ENCODE measurements at regions of chr1 and their contacts with region 1.

Region 1: DNA sequence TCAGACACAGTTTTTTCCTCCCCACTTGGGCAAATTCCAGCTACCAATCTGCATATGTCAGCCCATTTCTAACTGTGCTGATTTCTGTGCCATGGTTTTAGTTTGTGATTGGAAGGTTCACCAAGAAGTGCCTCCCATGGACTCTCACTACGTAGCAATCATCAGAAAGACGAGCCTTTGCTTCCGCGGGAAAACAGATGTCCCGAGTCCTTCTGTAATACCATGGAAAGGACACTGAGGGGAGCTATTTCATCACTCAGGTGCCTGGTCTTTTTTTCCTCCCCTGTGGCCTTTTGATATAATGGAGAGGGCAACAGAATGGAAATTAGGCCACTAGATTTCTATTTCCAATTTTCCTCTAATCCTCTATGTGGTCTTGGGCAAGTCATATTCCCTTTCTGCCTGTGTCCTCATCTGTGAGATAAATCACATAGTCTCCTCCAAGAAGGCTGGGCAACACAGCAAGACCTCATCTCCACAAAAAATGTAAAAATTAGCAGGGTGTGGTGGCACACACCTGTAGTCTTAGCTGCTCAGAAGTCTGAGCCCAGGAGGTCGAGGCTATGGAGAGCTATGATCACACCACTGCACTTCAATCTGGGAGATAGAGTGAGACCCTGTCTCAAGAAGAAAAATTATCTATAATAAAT is 24.8 kb downstream of the LEMD1 start:
- DNase-seq: peak; percentile 28
- H3K4me3 ChIP-seq: no peak overlapping the region
- H3K27ac ChIP-seq: no peak overlapping the region
- H3K4me1 ChIP-seq: no peaks in the 10 kb centered on the region
- H3K27me3 ChIP-seq: no peaks in the 10 kb centered on the region
- CTCF ChIP-seq: peak; percentile 61

Region 2: GRCh38 chr1:205430696-205431305 is 33.7 kb after region 1 on chr1:
- intact Hi-C with region 1: loop called (anchors 5 kb)
- DNase-seq: peak; percentile 80
- H3K4me3 ChIP-seq: peak overlapping the region; percentile 48
- H3K27ac ChIP-seq: no peak overlapping the region
- H3K4me1 ChIP-seq: peaks cover 4% of the 10 kb centered on the region
- H3K27me3 ChIP-seq: no peaks in the 10 kb centered on the region
- CTCF ChIP-seq: peak; percentile 69

Measured in colonic mucosa (tissue), 4 donors.